ENCODE measurements at regions of chr6 and their contacts with region 1.

Region 1: GRCh38 chr6:91167837-91168236 is 581.0 kb upstream of the MAP3K7 start:
- DNase-seq: no peak
- ATAC-seq: no peak
- H3K4me3 ChIP-seq: no peak overlapping the region
- H3K27ac ChIP-seq: no peak overlapping the region
- H3K4me1 ChIP-seq: no peaks in the 10 kb centered on the region
- H3K27me3 ChIP-seq: no peaks in the 10 kb centered on the region; a peak in 1 of 4 replicates
- CTCF ChIP-seq: 0 out of 6 replicates have a peak, but pooled peaks of 1 of the 3 experiments have one; percentile 4
- EP300 ChIP-seq: no peak
- POLR2A ChIP-seq: no peak
- RAD21 ChIP-seq: no peak

Region 2: DNA sequence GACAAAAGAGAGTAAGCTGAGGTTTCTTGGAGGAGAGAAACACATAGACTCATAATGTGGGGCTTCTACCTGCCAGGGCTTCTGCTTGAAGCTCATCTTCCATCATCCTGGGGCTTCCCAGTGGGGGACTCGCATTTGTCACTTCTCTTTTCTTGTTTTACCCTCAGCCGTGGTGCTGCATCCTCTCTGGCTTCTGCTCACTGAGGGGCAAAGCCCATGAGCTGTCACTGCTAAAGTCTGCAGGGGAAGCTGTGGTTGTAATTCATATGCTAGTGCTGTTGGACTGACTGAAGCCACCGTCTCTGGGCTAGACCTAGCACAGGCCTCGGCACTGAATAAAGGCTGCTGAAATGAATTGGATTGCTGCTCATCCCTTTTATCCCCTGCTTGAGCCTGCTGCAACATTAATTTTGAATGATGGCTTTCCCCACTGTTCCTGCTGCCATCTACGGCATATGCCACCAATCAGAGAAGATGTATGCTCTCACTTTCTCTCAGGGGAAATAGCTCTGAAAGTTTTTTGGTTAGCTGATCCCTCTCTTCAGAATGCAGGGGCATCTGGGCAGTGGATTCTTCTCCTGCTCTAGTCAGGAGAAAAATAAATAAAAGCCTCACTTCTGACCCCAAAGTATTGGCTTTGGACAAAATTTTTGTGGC is 12.6 kb before region 1 on chr6:
- CTCF ChIA-PET with region 1: interaction called, 3 read pairs
- POLR2A ChIA-PET with region 1: no interaction called
- RAD21 ChIA-PET with region 1: interaction called, 4 read pairs
- SMC1A ChIA-PET with region 1: interaction called, 15 read pairs
- in situ Hi-C with region 1: no loop called
- intact Hi-C with region 1: no loop called
- DNase-seq: no peak
- ATAC-seq: peak; percentile 79
- H3K4me3 ChIP-seq: no peak overlapping the region
- H3K27ac ChIP-seq: no peak overlapping the region
- H3K4me1 ChIP-seq: no peaks in the 10 kb centered on the region
- H3K27me3 ChIP-seq: no peaks in the 10 kb centered on the region
- CTCF ChIP-seq: no peak
- EP300 ChIP-seq: no peak
- POLR2A ChIP-seq: no peak
- RAD21 ChIP-seq: no peak

Region 3: DNA sequence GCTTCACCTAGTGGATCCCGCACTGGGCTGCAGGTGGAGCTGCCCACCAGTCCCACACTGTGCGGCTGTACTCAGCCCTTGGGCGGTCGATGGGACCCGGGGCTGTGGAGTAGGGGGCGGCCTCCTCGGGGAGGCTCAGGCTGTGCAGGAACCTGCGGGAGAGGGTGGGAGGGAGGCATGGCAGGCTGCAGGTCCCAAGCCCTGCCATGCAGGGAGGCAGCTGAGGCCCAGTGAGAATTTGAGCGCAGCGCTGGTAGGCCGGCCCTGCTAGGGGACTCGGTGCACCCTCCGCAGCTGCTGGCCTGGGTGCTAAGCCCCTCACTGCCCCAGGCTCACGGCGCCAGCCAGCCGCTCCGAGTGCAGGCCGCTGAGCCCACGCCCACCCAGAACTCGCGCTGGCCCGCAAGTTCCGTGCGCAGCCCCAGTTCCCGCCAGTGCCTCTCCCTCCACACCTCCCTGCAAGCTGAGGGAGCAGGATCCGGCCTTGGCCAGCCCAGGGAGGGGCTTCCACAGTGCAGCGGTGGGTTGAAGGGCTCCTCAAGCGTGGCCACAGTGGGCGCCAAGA is 843.9 kb after region 1 on chr6:
- CTCF ChIA-PET with region 1: no interaction called
- POLR2A ChIA-PET with region 1: no interaction called
- RAD21 ChIA-PET with region 1: no interaction called
- SMC1A ChIA-PET with region 1: no interaction called
- in situ Hi-C with region 1: no loop called
- intact Hi-C with region 1: no loop called
- DNase-seq: no peak
- ATAC-seq: no peak
- H3K4me3 ChIP-seq: no peak overlapping the region
- H3K27ac ChIP-seq: no peak overlapping the region
- H3K4me1 ChIP-seq: no peaks in the 10 kb centered on the region
- H3K27me3 ChIP-seq: no peaks in the 10 kb centered on the region
- CTCF ChIP-seq: no peak
- EP300 ChIP-seq: no peak
- POLR2A ChIP-seq: no peak
- RAD21 ChIP-seq: no peak

Measured in GM12878 (cell line).